Caco-2 (cell line): ENCODE measurements at regions of chr16 and their contacts with region 1.

Region 1: DNA sequence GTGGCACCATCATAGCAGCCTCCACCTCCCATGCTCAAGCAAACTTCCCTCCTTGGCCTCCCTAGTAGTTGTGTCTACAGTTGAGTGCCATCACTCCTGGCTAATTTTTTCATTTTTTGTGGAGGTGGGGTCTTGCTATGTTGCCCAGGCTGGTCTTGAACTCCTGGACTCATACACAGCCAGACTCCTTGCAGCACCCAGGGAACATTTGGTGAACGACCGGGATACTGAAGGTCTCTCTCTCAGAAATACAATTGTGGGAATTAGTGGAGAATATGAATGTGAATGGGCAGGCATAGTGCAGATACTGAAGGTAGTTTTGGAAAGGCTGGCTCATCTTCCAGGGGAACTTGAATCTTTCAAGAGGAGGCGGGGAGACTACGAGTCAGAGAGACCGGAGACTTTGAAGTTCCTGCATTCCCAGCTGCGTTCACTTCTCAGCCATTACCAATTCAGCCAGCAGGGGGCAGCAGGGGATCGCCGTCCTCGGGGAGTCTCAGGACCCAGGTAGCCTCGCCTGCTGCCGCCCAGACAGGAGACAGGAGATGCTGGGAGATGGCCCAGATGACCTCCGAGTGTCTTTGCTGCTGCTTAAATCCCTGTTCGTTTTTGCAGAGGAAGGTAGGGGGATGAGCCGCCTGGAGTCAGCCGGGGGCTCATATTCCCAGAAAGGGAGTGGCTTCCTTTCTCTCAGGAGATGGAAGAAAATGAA is 68.6 kb downstream of the HAPSTR1 start:
- DNase-seq: peak; percentile 70 to 78
- H3K4me3 ChIP-seq: no peak overlapping the region
- H3K4me3 Mint-ChIP-seq: no peak overlapping the region
- H3K27ac Mint-ChIP-seq: no peak overlapping the region
- H3K4me1 ChIP-seq: no peaks in the 10 kb centered on the region
- H3K4me1 Mint-ChIP-seq: no peaks in the 10 kb centered on the region
- H3K27me3 ChIP-seq: no peaks in the 10 kb centered on the region
- H3K27me3 Mint-ChIP-seq: no peaks in the 10 kb centered on the region
- CTCF ChIP-seq: peak; percentile 66 to 74

Region 2: DNA sequence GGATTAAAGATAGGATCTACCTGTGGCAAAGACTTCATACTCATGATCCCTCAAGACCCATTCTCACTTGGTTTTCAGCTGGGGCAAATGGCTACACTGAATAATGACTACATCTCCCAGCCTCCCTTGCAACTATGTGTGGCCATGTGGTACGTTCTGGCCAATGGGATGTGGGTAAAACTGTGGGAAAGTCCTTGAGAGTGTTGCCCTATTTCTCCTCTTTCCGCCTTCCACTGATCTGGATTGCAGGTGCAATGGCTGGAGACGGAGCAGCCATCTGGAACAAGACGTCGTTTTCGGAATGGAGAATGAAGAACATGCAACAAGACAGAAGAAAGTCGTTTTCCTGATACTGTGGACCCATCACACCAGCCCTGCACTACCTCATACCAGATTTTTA is 20.0 kb before region 1 on chr16:
- CTCF ChIA-PET with region 1: no interaction called
- POLR2A ChIA-PET with region 1: no interaction called
- intact Hi-C with region 1: loop called (anchors 2 kb)
- DNase-seq: peak; percentile 49 to 50
- H3K4me3 ChIP-seq: no peak overlapping the region
- H3K4me3 Mint-ChIP-seq: no peak overlapping the region
- H3K27ac Mint-ChIP-seq: no peak overlapping the region
- H3K4me1 ChIP-seq: no peaks in the 10 kb centered on the region
- H3K4me1 Mint-ChIP-seq: no peaks in the 10 kb centered on the region
- H3K27me3 ChIP-seq: no peaks in the 10 kb centered on the region
- H3K27me3 Mint-ChIP-seq: no peaks in the 10 kb centered on the region
- CTCF ChIP-seq: no peak

Region 3: GRCh38 chr16:9225611-9226316 is 65.8 kb after region 1 on chr16:
- CTCF ChIA-PET with region 1: no interaction called
- POLR2A ChIA-PET with region 1: no interaction called
- intact Hi-C with region 1: loop called (anchors 10 kb)
- DNase-seq: peak in 1 of 2 experiments; percentile 9
- H3K4me3 ChIP-seq: no peak overlapping the region
- H3K4me3 Mint-ChIP-seq: no peak overlapping the region
- H3K27ac Mint-ChIP-seq: no peak overlapping the region
- H3K4me1 ChIP-seq: no peaks in the 10 kb centered on the region
- H3K4me1 Mint-ChIP-seq: no peaks in the 10 kb centered on the region
- H3K27me3 ChIP-seq: no peaks in the 10 kb centered on the region
- H3K27me3 Mint-ChIP-seq: peaks cover 8% of the 10 kb centered on the region
- CTCF ChIP-seq: peak in 1 of 2 experiments; percentile 28